CD8-positive, alpha-beta T cell (primary cell): ENCODE measurements at regions of chr2 and their contacts with region 1.

Region 1: GRCh38 chr2:218360447-218360846 is 3.8 kb downstream of the CATIP start:
- DNase-seq: peak in 1 of 9 experiments; percentile 17
- ATAC-seq: no peak
- H3K4me3 ChIP-seq: no peak overlapping the region
- H3K4me3 Mint-ChIP-seq: no peak overlapping the region
- H3K27ac ChIP-seq: no peak overlapping the region
- H3K27ac Mint-ChIP-seq: no peak overlapping the region
- H3K4me1 ChIP-seq: no peaks in the 10 kb centered on the region
- H3K4me1 Mint-ChIP-seq: peaks cover 3% of the 10 kb centered on the region
- H3K27me3 ChIP-seq: no peaks in the 10 kb centered on the region
- H3K27me3 Mint-ChIP-seq: no peaks in the 10 kb centered on the region
- CTCF ChIP-seq: no peak

Region 2: DNA sequence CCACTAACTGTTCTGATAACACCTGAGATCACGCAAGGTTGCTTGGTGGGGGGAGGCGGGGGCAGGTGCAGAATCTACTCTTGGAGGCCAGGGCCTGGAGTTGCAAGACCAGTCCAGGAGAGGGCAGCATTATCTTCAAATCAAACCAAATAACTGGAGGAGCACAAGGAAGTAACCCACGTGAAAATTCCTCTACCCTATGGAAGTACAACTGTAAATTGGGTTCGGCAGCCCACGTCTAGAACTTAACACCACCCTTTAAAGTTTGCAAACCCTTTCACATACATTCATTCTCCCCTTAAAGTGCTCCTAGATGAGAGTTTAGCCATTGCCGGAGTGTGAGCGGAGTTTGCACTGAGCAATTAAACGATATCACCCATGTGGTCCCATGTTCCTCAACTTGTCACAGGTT is 174.1 kb before region 1 on chr2:
- CTCF ChIA-PET with region 1: interaction called, 6 read pairs
- POLR2A ChIA-PET with region 1: no interaction called
- intact Hi-C with region 1: loop called in 1 of 2 experiments (anchors 1 kb)
- DNase-seq: peak; percentile 48 to 85 (median 71)
- ATAC-seq: peak; percentile 100
- H3K4me3 ChIP-seq: no peak overlapping the region
- H3K4me3 Mint-ChIP-seq: no peak overlapping the region
- H3K27ac ChIP-seq: no peak overlapping the region
- H3K27ac Mint-ChIP-seq: no peak overlapping the region
- H3K4me1 ChIP-seq: peaks cover 8% of the 10 kb centered on the region
- H3K4me1 Mint-ChIP-seq: peaks cover 8% of the 10 kb centered on the region
- H3K27me3 ChIP-seq: no peaks in the 10 kb centered on the region
- H3K27me3 Mint-ChIP-seq: no peaks in the 10 kb centered on the region
- CTCF ChIP-seq: peak; percentile 74

Region 3: DNA sequence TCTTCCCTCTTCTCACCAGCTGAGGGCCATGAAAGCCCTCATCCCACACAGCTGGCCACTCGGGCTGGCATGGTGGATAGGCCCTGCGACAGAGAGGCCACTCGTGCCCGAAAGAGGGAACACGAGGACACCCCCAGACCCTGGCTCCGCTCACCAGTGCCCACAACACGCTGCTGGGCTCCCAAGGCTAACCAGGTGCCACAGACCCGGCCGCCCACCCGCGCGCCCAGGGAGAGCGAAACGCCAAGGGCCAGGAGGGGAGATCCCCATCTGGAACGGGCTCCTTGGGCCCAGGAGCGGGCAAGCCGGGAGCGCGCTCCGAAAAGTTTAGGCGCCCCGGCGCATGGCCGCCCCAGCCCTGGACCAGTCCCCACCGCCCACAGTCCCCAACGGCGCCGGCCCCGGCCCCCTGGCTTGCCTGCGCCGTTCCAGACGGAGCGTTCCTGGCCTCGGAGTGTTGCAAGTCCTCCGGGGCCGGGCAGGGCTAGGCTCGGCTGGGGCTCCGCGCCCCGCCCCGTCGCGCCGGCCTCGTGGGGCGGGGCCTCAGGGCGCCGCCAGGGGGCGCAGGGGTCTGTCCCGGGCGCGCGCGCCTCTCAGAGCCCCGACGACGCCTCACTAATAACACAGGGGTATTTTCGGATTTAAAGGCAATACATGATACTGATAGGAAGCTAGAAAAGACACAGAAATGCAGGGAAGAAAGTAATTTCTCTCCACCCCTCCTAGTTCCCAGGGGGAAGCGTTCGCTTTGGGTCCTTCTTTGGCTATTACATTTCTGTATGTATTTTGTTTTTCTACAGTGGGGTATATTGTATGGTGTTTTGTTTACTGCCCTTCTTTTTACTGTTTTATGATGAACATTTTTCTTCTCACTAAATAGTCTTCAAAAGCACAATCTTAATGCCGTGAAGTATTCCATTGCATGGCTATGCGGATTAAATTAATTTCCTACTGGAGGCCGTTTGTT is 68.1 kb before region 1 on chr2 and contains the start of gene TMBIM1:
- CTCF ChIA-PET with region 1: interaction called, 338 read pairs
- POLR2A ChIA-PET with region 1: interaction called, 5 read pairs
- intact Hi-C with region 1: loop called (anchors 2 kb)
- DNase-seq: peak; percentile 64 to 91 (median 79)
- ATAC-seq: peak; percentile 82
- H3K4me3 ChIP-seq: peak within 1 kb of the TSS; percentile 79 to 89
- H3K4me3 Mint-ChIP-seq: peak within 1 kb of the TSS; percentile 83
- H3K27ac ChIP-seq: peak within 1 kb of the TSS; percentile 72 to 87
- H3K27ac Mint-ChIP-seq: peak within 1 kb of the TSS; percentile 98
- H3K4me1 ChIP-seq: peaks cover 50% of the 10 kb centered on the region
- H3K4me1 Mint-ChIP-seq: peaks cover 51% of the 10 kb centered on the region
- H3K27me3 ChIP-seq: no peaks in the 10 kb centered on the region
- H3K27me3 Mint-ChIP-seq: no peaks in the 10 kb centered on the region
- CTCF ChIP-seq: peak; percentile 93
- total RNA-seq, gene TMBIM1: 80.8 to 86.7 TPM

Region 4: GRCh38 chr2:218312267-218312756 is 48.1 kb before region 1 on chr2:
- CTCF ChIA-PET with region 1: interaction called, 33 read pairs
- POLR2A ChIA-PET with region 1: interaction called, 7 read pairs
- intact Hi-C with region 1: no loop called
- DNase-seq: no peak
- ATAC-seq: no peak
- H3K4me3 ChIP-seq: no peak overlapping the region
- H3K4me3 Mint-ChIP-seq: no peak overlapping the region
- H3K27ac ChIP-seq: no peak overlapping the region
- H3K27ac Mint-ChIP-seq: peak overlapping the region; percentile 55
- H3K4me1 ChIP-seq: peaks cover 20% of the 10 kb centered on the region
- H3K4me1 Mint-ChIP-seq: peaks cover 29% of the 10 kb centered on the region
- H3K27me3 ChIP-seq: no peaks in the 10 kb centered on the region
- H3K27me3 Mint-ChIP-seq: no peaks in the 10 kb centered on the region
- CTCF ChIP-seq: no peak

Region 5: DNA sequence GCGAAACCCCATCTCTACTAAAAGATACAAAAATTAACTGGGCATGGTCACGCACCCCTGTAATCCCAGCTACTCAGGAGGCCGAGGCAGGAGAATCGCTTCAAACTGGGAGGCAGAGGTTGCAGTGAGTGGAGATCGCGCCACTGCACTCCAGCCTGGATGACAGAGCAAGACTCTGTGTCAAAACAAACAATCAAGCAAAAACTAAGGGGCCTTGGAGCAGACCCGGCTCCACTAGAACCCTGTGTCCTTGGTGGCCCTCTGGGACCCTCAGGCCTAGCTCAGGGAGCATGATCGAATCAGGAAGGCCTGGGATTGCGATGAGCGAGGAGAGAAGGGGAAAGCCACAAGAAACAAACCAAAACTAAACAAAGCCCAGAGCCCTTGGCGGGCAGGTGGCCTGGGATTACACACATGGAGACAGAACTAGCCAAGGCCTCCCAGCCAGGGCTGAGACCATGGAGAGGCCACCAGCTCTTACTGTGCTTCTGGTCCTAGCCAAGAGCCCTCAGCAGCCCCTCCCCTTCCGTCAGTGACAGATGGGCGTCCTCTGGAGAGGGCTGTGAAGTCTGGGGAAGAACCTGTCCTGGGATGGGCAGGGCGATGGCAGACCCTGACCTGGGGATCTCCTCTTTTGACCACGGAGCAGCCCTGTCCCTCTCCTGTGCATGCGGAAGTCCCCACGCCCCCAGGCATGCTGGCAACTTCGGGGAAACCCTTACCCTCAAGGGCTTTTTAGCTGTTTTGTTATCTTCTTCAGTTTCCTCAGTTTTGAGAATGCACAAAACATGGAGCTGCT is 31.2 kb before region 1 on chr2:
- CTCF ChIA-PET with region 1: interaction called, 10 read pairs
- POLR2A ChIA-PET with region 1: no interaction called
- intact Hi-C with region 1: loop called in 1 of 2 experiments (anchors 5 kb)
- DNase-seq: peak in 1 of 9 experiments; percentile 14
- ATAC-seq: no peak
- H3K4me3 ChIP-seq: no peak overlapping the region
- H3K4me3 Mint-ChIP-seq: no peak overlapping the region
- H3K27ac ChIP-seq: no peak overlapping the region
- H3K27ac Mint-ChIP-seq: no peak overlapping the region
- H3K4me1 ChIP-seq: peaks cover 21% of the 10 kb centered on the region
- H3K4me1 Mint-ChIP-seq: peaks cover 18% of the 10 kb centered on the region
- H3K27me3 ChIP-seq: no peaks in the 10 kb centered on the region
- H3K27me3 Mint-ChIP-seq: no peaks in the 10 kb centered on the region
- CTCF ChIP-seq: no peak